ENCODE measurements at regions of chr14 and their contacts with region 1.

Region 1: DNA sequence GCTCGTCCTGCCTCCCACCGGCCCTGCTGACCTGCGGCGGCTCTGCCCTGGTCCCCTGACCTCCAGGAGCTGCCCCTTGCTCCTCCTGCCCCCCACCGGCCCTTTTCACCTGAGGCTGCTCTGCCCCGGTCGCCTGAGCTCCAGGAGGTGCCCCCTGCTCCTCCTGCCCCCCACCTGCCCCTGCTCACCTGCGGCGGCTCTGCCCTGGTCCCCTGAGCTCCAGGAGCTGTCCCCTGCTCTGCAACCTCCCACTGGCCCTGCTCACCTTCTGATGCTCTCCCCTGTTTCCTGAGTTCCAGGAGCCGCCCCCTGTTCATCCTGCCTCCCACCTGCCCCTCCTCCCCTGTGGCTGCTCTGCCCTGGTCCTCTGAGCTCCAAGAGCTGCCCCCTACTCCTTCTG is 101.3 kb downstream of the TMEM121 start:
- DNase-seq: peak in 3 of 10 donors; percentile 32 to 45 (median 37)

Region 2: GRCh38 chr14:105739331-105740102 is 111.8 kb after region 1 on chr14:
- intact Hi-C with region 1: loop called (anchors 5 kb)
- DNase-seq: peak in 1 of 10 donors; percentile 40

Measured in posterior cingulate gyrus (tissue), 11 donors.